Mammary epithelial cell (primary cell): ENCODE measurements at regions of chr7 and their contacts with region 1.

Region 1: GRCh38 chr7:17769918-17770317 is 170.4 kb downstream of the SNX13 start:
- DNase-seq: peak; percentile 58
- H3K4me3 ChIP-seq: no peak overlapping the region
- H3K27ac ChIP-seq: no peak overlapping the region
- H3K4me1 ChIP-seq: peaks cover 42% of the 10 kb centered on the region
- H3K27me3 ChIP-seq: no peaks in the 10 kb centered on the region
- CTCF ChIP-seq: peak; percentile 82 to 96

Region 2: GRCh38 chr7:17706734-17707133 is 63.2 kb before region 1 on chr7:
- CTCF ChIA-PET with region 1: interaction called, 4 read pairs
- dilution Hi-C with region 1: no loop called
- in situ Hi-C with region 1: no loop called
- intact Hi-C with region 1: loop called (anchors 2 kb)
- DNase-seq: peak; percentile 65
- H3K4me3 ChIP-seq: no peak overlapping the region
- H3K27ac ChIP-seq: no peak overlapping the region
- H3K4me1 ChIP-seq: no peaks in the 10 kb centered on the region
- H3K27me3 ChIP-seq: no peaks in the 10 kb centered on the region
- CTCF ChIP-seq: peak; percentile 57 to 82

Region 3: DNA sequence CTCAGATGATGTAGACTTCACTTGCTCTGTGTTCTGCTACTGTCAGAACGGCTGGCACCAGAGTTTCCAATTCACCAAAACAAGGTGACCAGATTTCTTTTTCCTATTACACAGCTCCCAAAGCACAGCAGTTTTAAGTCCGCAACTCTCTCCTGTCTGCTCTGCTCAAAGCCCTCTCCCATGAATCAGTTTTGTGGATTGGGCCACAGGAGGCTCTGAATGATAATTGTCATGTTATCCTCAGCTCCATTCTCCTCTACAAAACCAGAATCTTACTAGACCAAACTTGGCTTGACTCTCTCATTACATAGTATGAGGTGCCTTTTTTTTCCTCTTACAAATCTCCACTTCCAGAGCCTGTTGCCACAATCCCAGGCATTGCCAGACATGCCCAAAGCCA is 53.1 kb before region 1 on chr7:
- CTCF ChIA-PET with region 1: no interaction called
- dilution Hi-C with region 1: no loop called
- in situ Hi-C with region 1: no loop called
- intact Hi-C with region 1: no loop called
- DNase-seq: no peak
- H3K4me3 ChIP-seq: no peak overlapping the region
- H3K27ac ChIP-seq: no peak overlapping the region
- H3K4me1 ChIP-seq: peaks cover 3% of the 10 kb centered on the region
- H3K27me3 ChIP-seq: no peaks in the 10 kb centered on the region
- CTCF ChIP-seq: no peak

Region 4: DNA sequence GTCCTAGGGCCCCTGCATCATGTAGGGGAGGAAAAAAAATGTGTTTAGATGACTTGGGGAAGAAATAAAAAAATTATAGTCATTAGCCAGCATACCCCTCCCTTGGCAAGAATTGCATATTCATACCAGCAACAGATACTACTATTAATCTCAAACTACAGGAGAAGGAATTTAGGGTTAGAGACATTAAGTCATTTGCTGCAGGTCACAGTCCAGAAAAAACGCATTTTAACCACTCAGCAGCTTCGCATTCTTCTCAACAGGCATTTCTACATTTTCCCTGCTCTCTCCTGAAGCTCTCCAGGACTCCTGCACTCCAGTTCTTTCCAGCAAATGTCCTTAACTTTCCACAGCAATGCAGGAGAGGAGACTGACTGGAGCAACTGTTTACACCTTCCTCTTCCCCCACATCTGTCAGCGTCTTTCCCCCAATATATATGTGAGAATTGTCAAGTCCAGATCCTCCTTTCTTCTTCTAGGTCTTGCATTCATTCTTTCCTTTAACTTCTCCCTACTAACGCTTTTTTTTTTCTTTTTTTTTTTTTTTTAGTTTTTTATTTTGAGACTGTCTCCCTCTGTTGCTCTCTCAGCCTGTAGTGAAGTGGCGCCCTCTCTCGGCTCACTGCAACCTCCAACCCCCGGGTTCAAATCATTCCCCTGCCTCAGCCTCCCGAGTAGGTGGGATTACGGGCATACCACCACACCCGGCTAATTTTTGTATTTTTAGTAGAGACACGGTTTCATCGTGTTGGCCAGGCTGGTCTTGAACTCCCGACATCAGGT is 222.1 kb after region 1 on chr7:
- CTCF ChIA-PET with region 1: no interaction called
- dilution Hi-C with region 1: no loop called
- in situ Hi-C with region 1: no loop called
- intact Hi-C with region 1: loop called (anchors 1 kb)
- DNase-seq: no peak
- H3K4me3 ChIP-seq: no peak overlapping the region
- H3K27ac ChIP-seq: no peak overlapping the region
- H3K4me1 ChIP-seq: no peaks in the 10 kb centered on the region
- H3K27me3 ChIP-seq: no peaks in the 10 kb centered on the region
- CTCF ChIP-seq: peak; percentile 23 to 44

Region 5: GRCh38 chr7:18151422-18151821 is 381.5 kb after region 1 on chr7:
- CTCF ChIA-PET with region 1: no interaction called
- dilution Hi-C with region 1: no loop called
- in situ Hi-C with region 1: no loop called
- intact Hi-C with region 1: loop called (anchors 5 kb)
- DNase-seq: no peak
- H3K4me3 ChIP-seq: no peak overlapping the region
- H3K27ac ChIP-seq: no peak overlapping the region
- H3K4me1 ChIP-seq: no peaks in the 10 kb centered on the region
- H3K27me3 ChIP-seq: peaks cover 3% of the 10 kb centered on the region
- CTCF ChIP-seq: peak in 1 of 2 donors; percentile 25

Region 6: GRCh38 chr7:18345641-18346234 is 575.8 kb after region 1 on chr7:
- CTCF ChIA-PET with region 1: no interaction called
- dilution Hi-C with region 1: no loop called
- in situ Hi-C with region 1: no loop called
- intact Hi-C with region 1: loop called (anchors 1 kb)
- DNase-seq: peak; percentile 36
- H3K4me3 ChIP-seq: no peak overlapping the region
- H3K27ac ChIP-seq: no peak overlapping the region
- H3K4me1 ChIP-seq: no peaks in the 10 kb centered on the region
- H3K27me3 ChIP-seq: no peaks in the 10 kb centered on the region
- CTCF ChIP-seq: peak; percentile 84 to 87